Psoas muscle (tissue), 8 donors: ENCODE measurements at regions of chr7 and their contacts with region 1.

Region 1: DNA sequence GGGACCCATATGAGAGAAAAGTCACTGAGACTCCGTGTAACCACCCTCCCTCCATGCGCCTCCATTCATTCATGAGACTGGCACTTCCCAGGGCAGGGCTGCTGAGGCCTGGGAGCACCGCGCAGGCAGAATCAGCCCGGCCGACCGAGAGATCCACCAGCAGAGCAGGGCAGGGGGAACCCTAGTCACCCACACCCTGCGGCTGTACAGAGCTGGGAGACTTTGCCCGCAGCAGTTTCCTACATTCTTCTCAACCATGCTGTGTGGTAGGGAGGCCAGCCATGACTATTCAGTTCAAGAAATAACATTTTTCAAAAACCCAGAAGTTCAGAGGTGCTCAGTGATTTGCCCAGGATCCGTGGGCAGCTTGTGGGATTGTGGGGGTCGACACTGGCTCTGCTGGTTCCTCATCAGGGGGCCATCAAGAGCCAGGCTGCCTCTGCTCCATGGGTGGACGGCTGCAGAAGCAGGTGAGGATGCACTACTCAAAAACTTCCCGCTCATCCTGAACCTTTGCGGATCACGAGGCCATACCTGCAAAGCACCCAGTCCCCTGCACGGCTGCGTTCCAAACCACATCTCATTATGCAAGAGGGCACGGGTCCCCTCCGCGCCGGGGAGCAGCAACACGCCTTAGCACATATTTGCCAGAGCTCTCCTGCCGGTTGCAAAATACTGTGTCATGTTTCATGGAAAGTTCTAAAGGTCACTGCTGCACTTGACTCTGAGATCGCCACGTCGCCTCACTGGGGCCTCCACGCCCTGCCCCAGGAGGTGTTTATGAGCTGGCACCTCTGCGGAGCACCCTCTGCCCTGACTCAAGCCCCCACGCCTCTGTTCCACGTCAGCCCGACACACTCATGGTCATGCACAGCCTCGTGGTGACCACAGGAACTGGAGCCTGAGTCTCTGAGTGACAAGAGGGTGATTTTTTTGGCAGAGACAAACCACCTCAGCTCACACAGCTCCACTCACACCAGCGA is 132.0 kb downstream of the PRKAG2 start:
- DNase-seq: peak; percentile 84 to 96
- ATAC-seq: peak; percentile 92 to 96 (median 95)
- H3K4me3 ChIP-seq: peak overlapping the region; percentile 42
- H3K27ac ChIP-seq: peak overlapping the region; percentile 59
- H3K4me1 ChIP-seq: peaks cover 38% of the 10 kb centered on the region
- H3K27me3 ChIP-seq: peaks cover 0 to 1% (median 0%) of the 10 kb centered on the region in 3 donors
- CTCF ChIP-seq: peak; percentile 37

Region 2: DNA sequence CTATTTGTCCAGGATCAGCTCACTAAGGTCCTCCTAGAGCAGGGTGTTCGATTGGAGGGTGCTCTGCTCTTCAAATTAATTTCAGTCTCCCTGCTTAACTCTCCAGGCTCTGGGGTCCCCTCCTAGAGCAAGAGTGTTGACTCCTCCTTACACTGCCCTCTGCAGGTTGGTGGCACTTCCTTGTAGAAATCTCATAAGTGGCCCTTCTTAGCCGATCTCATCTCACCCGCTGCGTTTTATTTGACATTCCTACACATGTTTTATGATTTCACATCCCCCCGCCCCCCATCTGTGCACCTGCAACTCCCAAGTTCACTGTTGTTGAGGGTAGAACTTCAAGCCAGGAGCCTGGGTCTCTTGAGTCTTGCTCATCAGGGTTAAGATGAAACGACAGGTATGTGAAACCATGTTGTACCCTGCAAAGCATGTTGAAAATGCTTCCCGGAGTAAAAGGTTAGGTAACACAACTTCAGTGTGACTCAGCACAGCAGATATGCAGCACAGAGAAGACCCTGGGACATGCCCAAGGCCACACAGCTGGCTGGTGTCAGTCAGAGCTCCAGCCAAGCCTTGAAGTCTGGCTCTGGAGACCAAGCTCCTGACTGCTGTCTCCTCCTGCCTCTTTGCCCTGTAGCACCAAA is 39.2 kb before region 1 on chr7:
- intact Hi-C with region 1: loop called in 1 of 2 experiments (anchors 5 kb)
- DNase-seq: peak; percentile 59 to 76
- ATAC-seq: peak; percentile 79 to 88 (median 83)
- H3K4me3 ChIP-seq: peak overlapping the region; percentile 35
- H3K27ac ChIP-seq: peak overlapping the region; percentile 47
- H3K4me1 ChIP-seq: peaks cover 45% of the 10 kb centered on the region
- H3K27me3 ChIP-seq: no peaks in the 10 kb centered on the region
- CTCF ChIP-seq: peak; percentile 42